ENCODE measurements at regions of chr5 and their contacts with region 1.

Region 1: GRCh38 chr5:160199410-160199911 is 29.8 kb upstream of the FABP6 start:
- DNase-seq: peak; percentile 78
- ATAC-seq: peak; percentile 96 to 97

Region 2: DNA sequence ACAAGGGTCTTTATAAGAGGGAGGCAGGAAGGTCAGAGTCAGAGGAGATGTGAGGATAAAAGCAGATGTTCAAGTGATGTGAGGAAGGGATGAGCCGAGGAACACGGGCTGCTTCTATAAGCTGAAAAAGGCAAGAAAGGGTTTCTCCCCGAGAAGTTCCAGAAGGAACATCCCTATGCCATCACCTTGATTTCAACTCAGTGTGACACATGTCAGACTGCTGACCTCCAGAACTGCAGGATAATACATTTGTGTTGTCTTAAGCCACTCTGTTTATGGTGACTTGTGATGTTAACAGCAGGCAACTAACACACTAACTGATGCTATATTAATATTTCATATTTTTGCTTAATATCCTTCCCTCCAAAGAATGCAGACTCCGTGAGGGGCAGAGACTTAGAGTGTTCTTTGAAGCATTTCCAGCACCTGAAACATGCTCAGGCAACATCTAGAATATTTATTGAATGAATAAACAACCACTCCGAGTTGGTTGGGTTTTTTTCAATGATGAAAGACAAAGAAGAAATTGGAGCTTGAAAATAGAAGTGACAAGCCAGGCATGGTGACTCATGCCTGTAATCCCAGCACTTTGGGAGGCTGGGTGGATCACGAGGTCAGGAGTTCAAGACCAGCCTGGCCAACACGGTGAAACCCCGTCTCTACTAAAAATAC is 360.8 kb before region 1 on chr5:
- intact Hi-C with region 1: no loop called
- DNase-seq: no peak
- ATAC-seq: no peak

Region 3: GRCh38 chr5:160092960-160093707 is 106.3 kb before region 1 on chr5:
- intact Hi-C with region 1: no loop called
- DNase-seq: no peak
- ATAC-seq: no peak

Region 4: DNA sequence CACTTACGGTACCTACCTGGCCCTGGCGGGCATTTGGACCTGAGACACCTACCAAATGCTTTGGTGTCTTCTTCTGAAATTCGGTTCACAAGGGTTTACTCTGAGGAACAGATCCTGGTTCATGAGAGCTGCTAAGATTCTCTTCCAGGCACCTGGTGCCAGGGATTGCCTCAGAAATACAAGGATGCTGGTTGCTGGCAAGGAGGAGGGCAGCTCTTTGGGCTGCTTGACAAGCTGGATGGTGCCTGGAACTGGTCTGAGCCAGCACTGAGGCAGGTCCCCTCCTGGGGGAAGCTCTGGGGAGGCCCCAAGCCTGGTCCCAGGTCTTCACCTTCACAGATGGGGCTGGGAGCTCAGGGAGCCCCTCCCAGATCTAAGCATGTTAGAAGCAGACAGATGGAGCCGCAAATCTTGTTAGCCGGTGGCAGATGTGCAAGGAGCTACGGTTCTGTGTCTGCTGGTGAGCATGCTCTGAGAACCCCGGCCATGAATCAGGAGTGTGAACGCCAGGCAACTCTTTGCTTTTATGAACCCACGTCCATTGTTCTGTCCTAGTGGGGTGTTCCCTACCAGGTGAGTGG is 46.1 kb after region 1 on chr5:
- intact Hi-C with region 1: no loop called
- DNase-seq: no peak
- ATAC-seq: no peak

Region 5: GRCh38 chr5:160342403-160342941 is 143.0 kb after region 1 on chr5:
- intact Hi-C with region 1: loop called (anchors 1 to 5 kb)
- DNase-seq: no peak
- ATAC-seq: peak; percentile 36 to 67